Activated B cell treated with CpG ODN at 0.5 μM for 24 hours (primary cell): ENCODE measurements at regions of chr14 and their contacts with region 1.

Region 1: DNA sequence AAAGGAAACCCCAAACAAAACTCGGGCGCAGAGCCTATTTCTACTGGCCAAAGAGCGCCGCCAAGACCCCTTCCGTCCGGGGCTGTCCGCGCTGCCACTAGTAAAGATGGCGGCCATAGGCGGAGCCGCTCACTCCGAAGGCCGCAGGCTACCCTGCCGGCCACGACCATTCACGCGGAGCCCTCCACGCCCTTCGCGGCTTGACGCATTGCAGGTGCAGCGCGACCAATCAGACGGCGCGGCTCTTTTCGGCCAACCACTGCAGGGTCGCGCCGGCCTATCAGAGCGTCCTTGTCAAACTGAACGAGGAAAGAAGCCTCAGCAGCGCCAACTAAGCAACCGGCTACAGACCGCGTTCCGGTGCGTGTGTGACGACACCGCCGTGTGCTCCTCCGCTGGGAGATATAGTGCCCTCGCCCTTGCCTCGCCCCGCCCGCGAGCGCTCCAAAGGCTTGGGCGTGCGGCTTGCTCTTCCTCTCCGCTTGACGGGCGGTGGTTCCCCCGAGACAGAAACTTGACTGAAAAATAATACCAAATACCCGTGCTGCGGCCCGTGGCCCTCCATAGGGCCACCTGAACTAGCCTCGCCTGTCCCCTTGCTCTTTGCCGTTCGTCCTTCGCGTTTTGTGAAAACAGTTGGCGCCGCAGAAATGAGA is 13.6 kb upstream of the CALM1 start:
- DNase-seq: peak; percentile 94
- ATAC-seq: peak; percentile 87
- H3K4me3 Mint-ChIP-seq: no peak overlapping the region
- H3K27ac Mint-ChIP-seq: no peak overlapping the region
- H3K4me1 Mint-ChIP-seq: no peaks in the 10 kb centered on the region
- H3K27me3 Mint-ChIP-seq: no peaks in the 10 kb centered on the region
- CTCF ChIP-seq: no peak

Region 2: GRCh38 chr14:90256354-90257131 is 126.7 kb before region 1 on chr14 and contains the start of gene PSMC1:
- CTCF ChIA-PET with region 1: no interaction called
- POLR2A ChIA-PET with region 1: interaction called, 21 read pairs
- intact Hi-C with region 1: loop called (anchors 1 kb)
- DNase-seq: peak; percentile 76
- ATAC-seq: peak; percentile 94
- H3K4me3 Mint-ChIP-seq: peak within 1 kb of the TSS; percentile 98
- H3K27ac Mint-ChIP-seq: peak within 1 kb of the TSS; percentile 92
- H3K4me1 Mint-ChIP-seq: peaks cover 40% of the 10 kb centered on the region
- H3K27me3 Mint-ChIP-seq: no peaks in the 10 kb centered on the region
- CTCF ChIP-seq: no peak
- total RNA-seq, gene PSMC1: 101 and 102 TPM in 2 replicates

Region 3: GRCh38 chr14:90393966-90394365 is 10.8 kb after region 1 on chr14:
- CTCF ChIA-PET with region 1: interaction called, 8 read pairs
- POLR2A ChIA-PET with region 1: interaction called, 492 read pairs
- intact Hi-C with region 1: loop called (anchors 1 kb)
- DNase-seq: no peak
- ATAC-seq: no peak
- H3K4me3 Mint-ChIP-seq: no peak overlapping the region
- H3K27ac Mint-ChIP-seq: no peak overlapping the region
- H3K4me1 Mint-ChIP-seq: peaks cover 10% of the 10 kb centered on the region
- H3K27me3 Mint-ChIP-seq: no peaks in the 10 kb centered on the region
- CTCF ChIP-seq: no peak

Region 4: GRCh38 chr14:90697577-90698206 is 314.5 kb after region 1 on chr14:
- CTCF ChIA-PET with region 1: no interaction called
- POLR2A ChIA-PET with region 1: no interaction called
- intact Hi-C with region 1: loop called (anchors 5 kb)
- DNase-seq: peak; percentile 37
- ATAC-seq: peak; percentile 75
- H3K4me3 Mint-ChIP-seq: no peak overlapping the region
- H3K27ac Mint-ChIP-seq: no peak overlapping the region
- H3K4me1 Mint-ChIP-seq: peaks cover 4% of the 10 kb centered on the region
- H3K27me3 Mint-ChIP-seq: peaks cover under 1% of the 10 kb centered on the region
- CTCF ChIP-seq: peak; percentile 76

Region 5: DNA sequence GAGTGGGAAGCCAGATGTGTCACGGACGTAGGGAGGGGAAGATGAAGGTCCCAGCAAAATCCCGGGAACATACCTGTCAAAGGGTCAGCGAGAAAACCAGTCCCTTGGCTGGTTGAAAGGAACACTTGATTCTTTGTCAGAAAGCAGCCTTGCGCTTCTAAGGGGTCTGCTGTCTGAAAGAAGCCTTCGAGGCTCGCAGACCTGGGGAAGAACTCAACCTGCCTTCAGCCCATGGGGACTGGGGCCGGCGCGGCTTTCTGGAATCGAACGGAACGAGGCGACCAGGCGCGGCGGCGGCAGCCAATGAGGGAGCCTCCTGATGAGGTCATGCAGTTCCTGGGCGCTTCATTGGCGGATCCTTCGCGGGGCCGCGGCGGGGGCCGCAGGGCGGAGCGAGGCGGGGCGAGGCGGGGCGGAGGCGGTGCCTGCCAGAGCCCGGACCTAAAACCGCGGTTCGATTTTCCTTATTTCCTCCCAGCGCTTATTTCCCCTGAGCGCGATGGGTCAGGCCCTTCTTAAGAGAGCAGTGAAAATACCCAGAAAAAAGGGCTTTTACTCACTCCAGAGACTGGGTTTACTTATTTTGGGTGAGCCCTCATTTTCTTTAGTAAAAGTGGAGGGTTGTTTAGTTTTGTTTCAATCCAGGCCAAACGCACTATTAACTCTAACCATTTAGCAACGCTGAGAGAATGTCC is 444.9 kb after region 1 on chr14:
- CTCF ChIA-PET with region 1: no interaction called
- POLR2A ChIA-PET with region 1: no interaction called
- intact Hi-C with region 1: loop called (anchors 2 kb)
- DNase-seq: peak; percentile 88
- ATAC-seq: peak; percentile 100
- H3K4me3 Mint-ChIP-seq: peak overlapping the region; percentile 81
- H3K27ac Mint-ChIP-seq: peak overlapping the region; percentile 65
- H3K4me1 Mint-ChIP-seq: peaks cover 12% of the 10 kb centered on the region
- H3K27me3 Mint-ChIP-seq: no peaks in the 10 kb centered on the region
- CTCF ChIP-seq: no peak

Region 6: DNA sequence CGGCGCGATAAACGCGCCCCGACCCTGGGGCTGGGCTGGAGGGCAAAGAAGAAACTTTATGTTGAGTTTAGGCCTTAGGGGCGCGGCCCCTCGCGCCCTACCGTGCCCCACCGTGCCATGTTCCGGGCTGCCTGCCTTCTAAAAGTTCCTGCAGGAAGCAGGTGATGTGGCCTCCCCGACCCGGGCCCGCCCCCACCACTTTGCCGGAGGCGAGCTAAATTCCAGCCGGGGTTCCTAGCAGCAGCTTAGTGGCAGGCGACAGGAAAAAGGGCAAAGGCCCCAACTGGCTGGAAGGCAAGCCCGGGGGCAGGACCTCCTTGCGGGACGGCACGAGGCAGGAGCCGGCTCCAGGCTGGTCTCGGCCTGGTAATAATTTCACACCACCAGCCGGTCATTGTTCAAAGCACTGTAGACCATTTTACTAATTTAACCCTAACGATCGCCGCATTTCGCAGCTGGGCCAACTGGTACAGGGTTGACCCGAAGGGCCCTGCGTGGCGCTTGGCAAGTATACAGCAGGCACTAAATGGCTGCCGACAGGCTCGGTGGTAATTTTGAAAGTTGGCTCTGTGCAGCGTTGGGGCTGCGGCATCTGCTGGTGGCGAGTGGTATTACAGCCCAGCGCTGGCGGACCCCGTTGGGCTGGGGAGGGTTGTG is 1035.3 kb after region 1 on chr14:
- CTCF ChIA-PET with region 1: no interaction called
- POLR2A ChIA-PET with region 1: no interaction called
- intact Hi-C with region 1: loop called (anchors 5 kb)
- DNase-seq: peak; percentile 84
- ATAC-seq: peak; percentile 37
- H3K4me3 Mint-ChIP-seq: peak overlapping the region; percentile 81
- H3K27ac Mint-ChIP-seq: peak overlapping the region; percentile 93
- H3K4me1 Mint-ChIP-seq: peaks cover 42% of the 10 kb centered on the region
- H3K27me3 Mint-ChIP-seq: no peaks in the 10 kb centered on the region
- CTCF ChIP-seq: peak; percentile 36